Left colon (tissue), 2 donors: ENCODE measurements at regions of chr6 and their contacts with region 1.

Region 1: GRCh38 chr6:96626759-96627364 is 63.9 kb downstream of the FHL5 start:
- DNase-seq: no peak
- ATAC-seq: peak; percentile 52

Region 2: GRCh38 chr6:96853083-96853482 is 226.2 kb after region 1 on chr6:
- intact Hi-C with region 1: no loop called
- DNase-seq: no peak
- ATAC-seq: no peak

Region 3: GRCh38 chr6:96897383-96898240 is 270.8 kb after region 1 on chr6 and contains the start of gene NDUFAF4:
- intact Hi-C with region 1: loop called in 1 of 2 experiments (anchors 5 kb)
- DNase-seq: peak; percentile 95 to 98
- ATAC-seq: peak; percentile 96
- total RNA-seq, gene NDUFAF4: 41.3 to 43.3 TPM

Region 4: GRCh38 chr6:97059473-97059872 is 432.6 kb after region 1 on chr6:
- intact Hi-C with region 1: loop called in 1 of 2 experiments (anchors 5 kb)
- DNase-seq: no peak
- ATAC-seq: peak; percentile 60

Region 5: GRCh38 chr6:97177905-97178304 is 551.0 kb after region 1 on chr6:
- intact Hi-C with region 1: no loop called
- DNase-seq: no peak
- ATAC-seq: no peak